Spleen (tissue), 13 donors: ENCODE measurements at regions of chr7 and their contacts with region 1.

Region 1: DNA sequence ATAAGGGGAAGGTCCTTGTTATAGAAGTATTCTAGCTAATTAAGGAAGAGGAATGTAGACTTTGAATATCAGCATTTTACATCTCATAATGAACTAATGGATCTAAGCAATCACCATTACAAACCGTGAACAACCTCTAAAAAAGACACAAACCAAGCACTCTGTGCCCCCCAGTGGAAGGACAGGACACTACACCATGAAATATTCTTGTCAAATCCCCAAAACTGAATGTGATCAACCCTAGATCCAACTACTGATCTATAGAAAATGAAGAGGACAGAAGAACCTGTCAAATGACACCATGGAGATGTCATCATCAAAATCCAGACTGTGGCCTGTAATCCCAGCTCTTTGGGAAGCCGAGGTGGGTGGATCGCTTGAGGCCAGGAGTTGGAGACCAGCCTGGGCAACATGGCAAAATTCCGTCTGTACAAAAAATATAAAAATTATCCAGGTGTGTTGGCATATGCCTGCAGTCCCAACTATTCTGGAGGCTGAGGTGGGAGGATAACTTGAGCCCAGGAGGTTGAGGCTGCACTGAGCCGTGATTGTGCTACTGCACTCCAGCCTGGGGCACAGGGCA is 111.3 kb upstream of the CARD11 start:
- DNase-seq: peak; percentile 33
- H3K4me3 ChIP-seq: no peak overlapping the region
- H3K27ac ChIP-seq: no peak overlapping the region
- H3K4me1 ChIP-seq: peaks cover 0 to 44% (median 1%) of the 10 kb centered on the region in 6 donors
- H3K27me3 ChIP-seq: peaks cover 0 to 20% (median 0%) of the 10 kb centered on the region in 7 donors
- CTCF ChIP-seq: peak; percentile 38 to 91 (median 70)
- POLR2A ChIP-seq: no peak

Region 2: DNA sequence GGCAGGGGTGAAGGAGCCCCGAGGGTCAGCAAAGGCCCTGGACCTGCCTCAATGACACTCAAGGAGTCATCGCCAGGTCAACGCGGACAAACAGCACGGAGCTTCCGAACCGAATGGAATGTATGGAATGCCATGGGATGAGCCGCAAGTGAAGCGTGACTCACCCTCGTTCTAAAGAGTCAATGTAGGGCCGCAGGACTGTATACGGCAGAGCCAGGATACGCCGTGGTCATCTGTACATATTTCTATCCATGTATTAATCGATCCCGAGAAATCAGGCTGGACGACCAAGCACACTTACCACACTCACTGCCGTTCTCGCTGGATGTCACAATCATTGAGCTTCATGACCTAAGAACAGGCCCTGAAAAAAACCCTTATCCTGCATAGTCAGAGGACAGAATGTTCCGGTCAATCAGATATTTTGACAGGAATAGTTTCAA is 845.1 kb before region 1 on chr7:
- intact Hi-C with region 1: no loop called
- DNase-seq: no peak
- H3K4me3 ChIP-seq: peak overlapping the region in 2 of 8 donors; percentile 72 to 97
- H3K27ac ChIP-seq: peak overlapping the region; percentile 53 to 98 (median 95)
- H3K4me1 ChIP-seq: peaks cover 19 to 95% (median 79%) of the 10 kb centered on the region in 6 donors
- H3K27me3 ChIP-seq: no peaks in the 10 kb centered on the region
- CTCF ChIP-seq: no peak
- POLR2A ChIP-seq: no peak

Region 3: GRCh38 chr7:2863461-2864066 is 291.4 kb before region 1 on chr7:
- intact Hi-C with region 1: loop called (anchors 10 kb)
- DNase-seq: peak; percentile 87
- H3K4me3 ChIP-seq: peak overlapping the region in 4 of 8 donors; percentile 4 to 23 (median 8)
- H3K27ac ChIP-seq: peak overlapping the region; percentile 67 to 92 (median 88)
- H3K4me1 ChIP-seq: peaks cover 19 to 37% (median 32%) of the 10 kb centered on the region in 6 donors
- H3K27me3 ChIP-seq: no peaks in the 10 kb centered on the region
- CTCF ChIP-seq: peak in 2 of 11 experiments; percentile 11 to 19
- POLR2A ChIP-seq: no peak

Region 4: GRCh38 chr7:3065724-3066143 is 89.3 kb before region 1 on chr7:
- intact Hi-C with region 1: loop called (anchors 10 kb)
- DNase-seq: peak; percentile 83
- H3K4me3 ChIP-seq: no peak overlapping the region
- H3K27ac ChIP-seq: peak overlapping the region in 3 of 8 donors; percentile 5 to 75 (median 50)
- H3K4me1 ChIP-seq: peaks cover 0 to 77% (median 52%) of the 10 kb centered on the region in 6 donors
- H3K27me3 ChIP-seq: peaks cover 0 to 5% (median 0%) of the 10 kb centered on the region in 7 donors
- CTCF ChIP-seq: peak in 10 of 11 experiments; percentile 41 to 78 (median 62)
- POLR2A ChIP-seq: no peak